ENCODE measurements at regions of chr15 and their contacts with region 1.

Region 1: GRCh38 chr15:64731012-64731806 is 44.2 kb downstream of the RBPMS2 start:
- DNase-seq: peak; percentile 95
- ATAC-seq: peak; percentile 76
- H3K4me3 Mint-ChIP-seq: no peak overlapping the region
- H3K27ac Mint-ChIP-seq: peak overlapping the region; percentile 94
- H3K4me1 Mint-ChIP-seq: peaks cover 20% of the 10 kb centered on the region
- H3K27me3 Mint-ChIP-seq: no peaks in the 10 kb centered on the region
- CTCF ChIP-seq: peak; percentile 88

Region 2: GRCh38 chr15:64610257-64610919 is 120.8 kb before region 1 on chr15:
- CTCF ChIA-PET with region 1: no interaction called
- POLR2A ChIA-PET with region 1: no interaction called
- DNase-seq: no peak
- ATAC-seq: no peak
- H3K4me3 Mint-ChIP-seq: no peak overlapping the region
- H3K27ac Mint-ChIP-seq: no peak overlapping the region; the same call in 1 of the 2 replicates
- H3K4me1 Mint-ChIP-seq: peaks cover 12% of the 10 kb centered on the region
- H3K27me3 Mint-ChIP-seq: no peaks in the 10 kb centered on the region
- CTCF ChIP-seq: no peak

Region 3: DNA sequence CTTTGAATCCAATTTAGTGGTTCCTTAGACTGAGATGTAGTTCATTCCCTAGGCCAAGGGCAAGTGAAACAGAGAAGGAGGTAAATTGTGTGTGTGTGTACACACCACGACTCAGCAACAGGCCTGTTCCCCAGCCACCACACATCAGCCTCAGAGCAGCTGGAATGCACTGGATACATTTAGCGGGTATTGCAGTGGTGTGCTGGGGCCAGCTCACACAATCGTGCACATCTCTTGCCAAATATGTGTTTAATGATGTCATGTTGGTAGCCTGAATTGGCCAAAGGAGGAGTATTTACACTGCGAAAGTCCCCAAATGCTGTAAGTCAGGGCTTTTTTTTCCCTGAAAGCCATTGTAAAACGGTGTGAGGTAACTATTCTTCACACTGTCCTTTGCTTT is 38.1 kb before region 1 on chr15:
- CTCF ChIA-PET with region 1: interaction called, 84 read pairs
- POLR2A ChIA-PET with region 1: interaction called, 4 read pairs
- DNase-seq: no peak
- ATAC-seq: no peak
- H3K4me3 Mint-ChIP-seq: no peak overlapping the region
- H3K27ac Mint-ChIP-seq: peak overlapping the region; percentile 97
- H3K4me1 Mint-ChIP-seq: peaks cover 73% of the 10 kb centered on the region
- H3K27me3 Mint-ChIP-seq: no peaks in the 10 kb centered on the region
- CTCF ChIP-seq: no peak

Region 4: DNA sequence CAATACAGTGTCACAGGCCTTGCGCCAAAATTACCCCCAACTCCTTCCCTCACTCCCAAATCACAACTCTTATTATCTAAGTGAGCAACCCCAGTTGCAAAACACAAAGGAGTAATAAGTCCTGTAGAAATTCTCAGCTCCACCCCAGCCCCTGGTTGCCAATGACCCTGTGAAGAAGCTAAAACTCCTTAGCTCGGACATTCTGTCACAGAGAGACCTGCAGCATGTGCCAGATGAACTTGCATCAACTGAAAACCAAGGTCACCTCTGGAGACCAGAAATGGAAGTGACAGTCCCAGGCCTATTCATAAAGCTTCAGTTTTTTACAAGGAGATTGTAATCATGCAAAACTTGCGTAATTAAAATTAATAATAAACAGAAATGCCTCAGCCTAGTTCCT is 11.0 kb before region 1 on chr15:
- CTCF ChIA-PET with region 1: interaction called, 12 read pairs
- POLR2A ChIA-PET with region 1: interaction called, 5 read pairs
- DNase-seq: no peak
- ATAC-seq: no peak
- H3K4me3 Mint-ChIP-seq: no peak overlapping the region
- H3K27ac Mint-ChIP-seq: peak overlapping the region; percentile 6
- H3K4me1 Mint-ChIP-seq: peaks cover 5% of the 10 kb centered on the region; the same call in 1 of the 2 replicates
- H3K27me3 Mint-ChIP-seq: no peaks in the 10 kb centered on the region
- CTCF ChIP-seq: no peak

Region 5: GRCh38 chr15:64816452-64816851 is 85.2 kb after region 1 on chr15:
- CTCF ChIA-PET with region 1: interaction called, 108 read pairs
- POLR2A ChIA-PET with region 1: interaction called, 3 read pairs
- DNase-seq: no peak
- ATAC-seq: no peak
- H3K4me3 Mint-ChIP-seq: no peak overlapping the region
- H3K27ac Mint-ChIP-seq: peak overlapping the region; percentile 77
- H3K4me1 Mint-ChIP-seq: peaks cover 37% of the 10 kb centered on the region
- H3K27me3 Mint-ChIP-seq: no peaks in the 10 kb centered on the region
- CTCF ChIP-seq: no peak

Region 6: GRCh38 chr15:64905119-64905831 is 174.1 kb after region 1 on chr15:
- CTCF ChIA-PET with region 1: interaction called, 10 read pairs
- POLR2A ChIA-PET with region 1: interaction called, 7 read pairs
- DNase-seq: peak; percentile 95
- ATAC-seq: peak; percentile 99
- H3K4me3 Mint-ChIP-seq: peak overlapping the region; percentile 71
- H3K27ac Mint-ChIP-seq: peak overlapping the region; percentile 99
- H3K4me1 Mint-ChIP-seq: peaks cover 16% of the 10 kb centered on the region
- H3K27me3 Mint-ChIP-seq: peaks cover 21% of the 10 kb centered on the region
- CTCF ChIP-seq: peak; percentile 64